Spleen (tissue), 13 donors: ENCODE measurements at regions of chr17 and their contacts with region 1.

Region 1: GRCh38 chr17:12545877-12546513 is 119.7 kb upstream of the MYOCD start:
- DNase-seq: no peak
- H3K4me3 ChIP-seq: no peak overlapping the region
- H3K27ac ChIP-seq: no peak overlapping the region
- H3K4me1 ChIP-seq: no peaks in the 10 kb centered on the region
- H3K27me3 ChIP-seq: no peaks in the 10 kb centered on the region
- CTCF ChIP-seq: peak in 10 of 11 experiments; percentile 17 to 72 (median 52)
- POLR2A ChIP-seq: no peak

Region 2: GRCh38 chr17:12646761-12647422 is 100.9 kb after region 1 on chr17:
- intact Hi-C with region 1: no loop called
- DNase-seq: no peak
- H3K4me3 ChIP-seq: no peak overlapping the region
- H3K27ac ChIP-seq: no peak overlapping the region
- H3K4me1 ChIP-seq: no peaks in the 10 kb centered on the region
- H3K27me3 ChIP-seq: peaks cover 0 to 6% (median 0%) of the 10 kb centered on the region in 7 donors
- CTCF ChIP-seq: no peak
- POLR2A ChIP-seq: no peak

Region 3: DNA sequence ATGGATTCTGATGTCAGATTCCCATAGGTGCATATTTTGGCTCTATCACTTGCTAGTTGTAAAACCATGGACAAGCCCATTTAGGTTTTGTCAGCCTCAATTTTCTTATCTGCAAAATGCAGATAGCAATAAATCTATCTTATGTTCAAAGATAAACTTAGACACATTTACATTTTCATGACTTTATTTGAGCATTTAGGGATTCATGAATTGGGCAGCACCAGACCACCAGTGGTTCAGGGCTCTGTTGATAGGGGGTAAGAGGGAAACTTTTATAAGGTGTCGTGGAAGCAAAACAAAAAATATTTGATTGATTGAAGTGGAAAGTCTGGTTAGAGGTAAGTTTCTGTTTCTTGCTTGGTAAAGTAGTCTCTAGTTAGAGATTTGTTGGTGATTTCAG is 260.6 kb after region 1 on chr17:
- intact Hi-C with region 1: no loop called
- DNase-seq: no peak
- H3K4me3 ChIP-seq: no peak overlapping the region
- H3K27ac ChIP-seq: no peak overlapping the region
- H3K4me1 ChIP-seq: no peaks in the 10 kb centered on the region
- H3K27me3 ChIP-seq: no peaks in the 10 kb centered on the region
- CTCF ChIP-seq: no peak
- POLR2A ChIP-seq: no peak

Region 4: DNA sequence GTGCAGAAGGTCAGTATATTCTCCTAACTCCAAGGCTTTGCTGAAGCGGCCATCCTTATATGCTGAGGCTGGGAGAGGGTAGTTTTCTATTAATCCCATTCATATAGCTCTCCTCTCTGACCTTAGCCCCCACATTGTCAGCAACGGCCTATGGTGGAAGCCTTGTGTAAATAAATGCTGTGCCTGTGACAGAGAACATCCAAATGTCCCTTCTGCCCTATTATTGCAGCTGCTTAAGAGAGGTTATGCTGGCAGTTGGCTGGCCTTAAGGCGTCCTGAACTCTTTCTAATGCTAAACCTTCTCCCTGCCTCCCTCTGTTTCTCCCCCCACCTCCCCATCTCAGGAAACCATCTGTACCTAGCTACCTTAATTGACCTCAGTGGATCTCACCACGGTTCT is 296.9 kb after region 1 on chr17:
- intact Hi-C with region 1: no loop called
- DNase-seq: no peak
- H3K4me3 ChIP-seq: no peak overlapping the region
- H3K27ac ChIP-seq: no peak overlapping the region
- H3K4me1 ChIP-seq: no peaks in the 10 kb centered on the region
- H3K27me3 ChIP-seq: no peaks in the 10 kb centered on the region
- CTCF ChIP-seq: no peak
- POLR2A ChIP-seq: no peak

Region 5: DNA sequence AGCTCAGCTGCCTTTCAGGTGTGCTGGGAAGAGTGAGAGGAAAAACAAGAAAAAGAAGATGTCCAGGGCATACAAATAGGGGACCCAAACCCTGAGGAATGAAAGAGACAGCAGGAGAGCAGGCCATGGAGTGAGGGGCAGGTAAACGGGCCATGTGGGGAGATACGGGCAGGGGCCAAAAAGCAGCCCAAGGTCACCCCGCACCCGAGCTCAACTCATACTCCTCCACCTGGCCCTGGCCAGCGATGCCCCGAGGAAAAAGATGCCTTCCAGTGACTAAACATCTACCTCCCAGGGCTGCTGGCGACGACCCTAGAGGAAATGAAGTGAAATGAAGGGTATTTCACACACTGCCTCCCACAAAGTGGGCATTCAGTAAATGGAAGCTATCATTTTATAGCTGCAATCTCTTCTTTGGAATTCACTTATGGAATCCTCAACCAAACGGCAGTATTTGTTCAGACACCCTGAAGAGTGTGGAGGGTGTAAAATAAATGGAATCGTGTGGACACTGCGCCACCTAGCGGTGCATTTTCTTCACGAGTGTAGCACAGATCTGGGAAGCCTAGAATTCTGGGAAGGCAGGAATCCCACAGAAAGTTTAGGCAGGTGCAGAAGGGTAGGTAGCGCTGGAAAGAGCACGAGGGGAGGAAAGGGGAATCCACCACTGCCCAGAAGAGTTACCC is 456.9 kb after region 1 on chr17:
- intact Hi-C with region 1: loop called (anchors 10 kb)
- DNase-seq: no peak
- H3K4me3 ChIP-seq: no peak overlapping the region
- H3K27ac ChIP-seq: no peak overlapping the region
- H3K4me1 ChIP-seq: peaks cover 0 to 10% (median 0%) of the 10 kb centered on the region in 6 donors
- H3K27me3 ChIP-seq: no peaks in the 10 kb centered on the region
- CTCF ChIP-seq: peak in 10 of 11 experiments; percentile 48 to 84 (median 72)
- POLR2A ChIP-seq: no peak